Activated CD4-positive, alpha-beta memory T cell treated with anti-CD3 and anti-CD28 coated beads for 36 hours (primary cell): ENCODE measurements at regions of chr10 and their contacts with region 1.

Region 1: DNA sequence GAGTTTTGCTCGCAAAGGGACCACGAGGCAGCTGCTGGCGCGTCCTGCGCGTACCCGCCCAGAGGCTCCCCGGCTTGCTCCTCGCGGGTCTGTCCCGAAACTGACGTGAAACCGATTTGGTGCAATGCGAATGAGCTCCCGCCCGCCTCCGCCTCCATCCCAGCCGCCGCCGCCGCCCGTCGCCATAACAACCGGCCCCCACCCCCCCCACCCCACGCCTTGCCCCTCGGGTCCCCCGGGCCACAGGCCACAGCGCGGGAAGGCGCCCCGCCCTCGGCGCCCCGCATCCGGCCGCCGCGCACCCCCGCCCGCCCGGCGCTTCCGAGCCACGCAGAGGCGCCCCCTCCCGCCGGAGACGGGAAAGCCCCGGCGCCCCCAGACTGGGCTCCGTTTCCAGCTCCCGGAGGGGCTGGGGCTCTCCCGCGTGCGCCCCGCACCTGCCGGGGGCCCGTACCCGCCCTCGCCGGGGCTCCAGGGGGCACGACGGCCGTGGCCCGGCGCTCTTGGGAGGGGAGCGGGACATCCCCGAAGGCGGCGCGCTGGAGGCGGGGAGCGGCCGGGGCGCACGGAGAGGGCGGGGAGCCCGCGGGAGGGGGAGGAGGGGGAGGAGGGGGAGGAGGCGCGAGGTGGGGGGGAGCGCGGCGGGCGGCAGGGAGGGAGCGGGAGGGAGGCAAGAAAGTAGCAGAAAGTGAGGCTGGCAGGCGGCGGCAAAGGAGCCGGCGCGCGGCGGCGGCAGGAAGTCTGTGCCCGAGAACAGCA is at the start of gene CAMK1D:
- DNase-seq: peak; percentile 90
- H3K4me3 Mint-ChIP-seq: peak within 1 kb of the TSS; percentile 94
- H3K27ac Mint-ChIP-seq: peak within 1 kb of the TSS; percentile 88
- H3K4me1 Mint-ChIP-seq: peaks cover 45% of the 10 kb centered on the region
- H3K27me3 Mint-ChIP-seq: peaks cover 5% of the 10 kb centered on the region
- total RNA-seq, gene CAMK1D: 17.7 to 17.9 TPM

Region 2: GRCh38 chr10:11936389-11937152 is 412.5 kb before region 1 on chr10:
- CTCF ChIA-PET with region 1: no interaction called
- POLR2A ChIA-PET with region 1: no interaction called
- intact Hi-C with region 1: no loop called
- DNase-seq: no peak
- H3K4me3 Mint-ChIP-seq: no peak overlapping the region
- H3K27ac Mint-ChIP-seq: no peak overlapping the region
- H3K4me1 Mint-ChIP-seq: no peaks in the 10 kb centered on the region
- H3K27me3 Mint-ChIP-seq: no peaks in the 10 kb centered on the region

Region 3: GRCh38 chr10:12195603-12196506 is 153.2 kb before region 1 on chr10 and contains the starts of genes CDC123 and NUDT5:
- CTCF ChIA-PET with region 1: no interaction called
- POLR2A ChIA-PET with region 1: no interaction called
- intact Hi-C with region 1: loop called (anchors 2 kb)
- DNase-seq: peak; percentile 93
- H3K4me3 Mint-ChIP-seq: peak within 1 kb of the TSS; percentile 94
- H3K27ac Mint-ChIP-seq: peak within 1 kb of the TSS; percentile 100
- H3K4me1 Mint-ChIP-seq: peaks cover 46% of the 10 kb centered on the region
- H3K27me3 Mint-ChIP-seq: no peaks in the 10 kb centered on the region
- total RNA-seq, gene CDC123: 134 TPM
- total RNA-seq, gene NUDT5: 115 to 118 TPM

Region 4: DNA sequence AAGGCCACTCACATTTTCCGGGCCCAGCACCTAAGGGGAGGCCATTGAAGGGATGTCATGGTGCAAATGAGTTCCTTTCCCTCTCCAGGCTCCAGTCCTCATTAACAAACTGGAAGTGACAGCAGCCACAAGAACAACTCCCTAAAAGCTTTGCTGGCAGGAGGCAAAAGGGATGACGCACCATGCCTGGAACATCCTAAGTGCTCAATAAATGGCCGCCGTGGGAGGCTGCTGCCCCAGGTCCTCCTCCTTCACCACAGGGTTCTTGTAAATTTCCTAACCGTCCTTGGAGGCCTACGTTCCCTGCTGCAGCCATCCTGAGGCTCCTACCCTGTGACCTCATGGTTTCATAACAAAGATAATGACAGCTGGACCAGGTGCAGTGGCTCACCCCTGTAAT is 41.0 kb before region 1 on chr10:
- CTCF ChIA-PET with region 1: no interaction called
- POLR2A ChIA-PET with region 1: no interaction called
- intact Hi-C with region 1: loop called (anchors 5 kb)
- DNase-seq: peak; percentile 30
- H3K4me3 Mint-ChIP-seq: no peak overlapping the region
- H3K27ac Mint-ChIP-seq: no peak overlapping the region
- H3K4me1 Mint-ChIP-seq: peaks cover 10% of the 10 kb centered on the region
- H3K27me3 Mint-ChIP-seq: no peaks in the 10 kb centered on the region

Region 5: DNA sequence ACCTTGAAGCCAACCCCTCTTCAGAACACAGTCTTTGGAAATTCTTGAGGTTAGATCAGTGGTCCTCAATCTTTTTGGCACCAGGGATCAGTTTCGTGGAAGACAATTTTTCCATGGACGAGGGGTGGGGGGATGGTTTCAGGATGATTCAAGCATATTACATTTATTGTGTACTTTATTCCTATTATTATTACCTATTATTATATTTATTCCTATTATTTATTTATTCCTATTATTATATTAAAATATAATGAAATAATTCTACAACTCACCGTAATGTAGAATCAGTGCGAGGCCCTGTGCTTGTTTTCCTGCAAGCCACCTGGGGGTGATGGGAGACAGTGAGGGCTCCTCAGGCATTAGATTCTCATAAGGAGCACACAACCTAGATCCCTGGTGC is 18.2 kb after region 1 on chr10:
- CTCF ChIA-PET with region 1: interaction called, 3 read pairs
- POLR2A ChIA-PET with region 1: interaction called, 5 read pairs
- intact Hi-C with region 1: loop called (anchors 2 kb)
- DNase-seq: no peak
- H3K4me3 Mint-ChIP-seq: no peak overlapping the region
- H3K27ac Mint-ChIP-seq: no peak overlapping the region
- H3K4me1 Mint-ChIP-seq: peaks cover 33% of the 10 kb centered on the region
- H3K27me3 Mint-ChIP-seq: no peaks in the 10 kb centered on the region

Region 6: GRCh38 chr10:12397147-12397896 is 48.3 kb after region 1 on chr10:
- CTCF ChIA-PET with region 1: no interaction called
- POLR2A ChIA-PET with region 1: no interaction called
- intact Hi-C with region 1: no loop called
- DNase-seq: no peak
- H3K4me3 Mint-ChIP-seq: no peak overlapping the region
- H3K27ac Mint-ChIP-seq: no peak overlapping the region
- H3K4me1 Mint-ChIP-seq: peaks cover 5% of the 10 kb centered on the region
- H3K27me3 Mint-ChIP-seq: no peaks in the 10 kb centered on the region

Region 7: GRCh38 chr10:12448729-12449391 is 99.8 kb after region 1 on chr10:
- CTCF ChIA-PET with region 1: no interaction called
- POLR2A ChIA-PET with region 1: no interaction called
- intact Hi-C with region 1: loop called (anchors 1 kb)
- DNase-seq: peak; percentile 88
- H3K4me3 Mint-ChIP-seq: peak overlapping the region; percentile 50
- H3K27ac Mint-ChIP-seq: peak overlapping the region; percentile 89
- H3K4me1 Mint-ChIP-seq: peaks cover 43% of the 10 kb centered on the region
- H3K27me3 Mint-ChIP-seq: no peaks in the 10 kb centered on the region

Region 8: DNA sequence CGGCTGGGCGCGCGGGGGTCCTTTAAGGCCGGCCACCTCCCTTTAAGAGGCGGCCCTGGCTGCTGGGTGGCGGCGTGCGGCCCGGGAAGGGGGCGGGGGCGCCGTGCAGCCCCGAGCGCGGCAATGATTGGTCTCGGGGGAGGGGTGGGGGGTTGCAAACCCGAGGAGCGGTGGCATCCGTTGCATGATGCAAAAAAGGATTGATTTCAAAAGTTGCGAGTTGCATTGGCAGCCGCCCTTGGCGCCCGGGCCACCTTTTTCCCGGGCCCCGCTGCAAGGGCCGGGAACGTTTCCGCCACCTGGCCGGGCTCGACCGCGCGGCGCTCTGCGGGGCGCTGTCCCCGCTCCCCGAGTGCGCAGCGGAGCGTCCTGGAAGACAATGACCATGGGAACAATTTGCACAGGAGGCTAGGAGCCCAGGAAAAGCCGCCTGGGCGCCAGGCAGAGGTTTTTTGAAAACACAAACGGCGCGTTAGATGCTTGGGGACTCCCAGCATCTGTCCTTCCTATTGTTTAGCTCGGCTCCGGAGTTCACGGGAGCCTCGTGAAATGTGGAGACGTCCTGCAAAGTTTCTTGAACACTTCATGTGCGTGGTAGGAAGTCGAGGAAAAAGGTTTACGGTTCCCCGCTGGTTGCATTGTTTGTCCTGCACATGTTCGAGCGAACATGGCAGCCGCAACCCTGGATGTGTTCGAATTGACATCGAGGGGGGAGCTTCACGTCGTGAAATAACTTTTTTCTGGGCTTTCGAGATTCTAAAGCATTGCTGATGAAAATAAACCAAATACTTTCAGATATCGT is 999.4 kb after region 1 on chr10 and contains the start of gene SEPHS1:
- CTCF ChIA-PET with region 1: no interaction called
- POLR2A ChIA-PET with region 1: no interaction called
- intact Hi-C with region 1: loop called (anchors 5 kb)
- DNase-seq: peak; percentile 91
- H3K4me3 Mint-ChIP-seq: peak within 1 kb of the TSS; percentile 94
- H3K27ac Mint-ChIP-seq: peak within 1 kb of the TSS; percentile 93
- H3K4me1 Mint-ChIP-seq: peaks cover 51% of the 10 kb centered on the region
- H3K27me3 Mint-ChIP-seq: no peaks in the 10 kb centered on the region
- total RNA-seq, gene SEPHS1: 57.2 to 57.6 TPM